ENCODE measurements at regions of chr12 and their contacts with region 1.

Region 1: DNA sequence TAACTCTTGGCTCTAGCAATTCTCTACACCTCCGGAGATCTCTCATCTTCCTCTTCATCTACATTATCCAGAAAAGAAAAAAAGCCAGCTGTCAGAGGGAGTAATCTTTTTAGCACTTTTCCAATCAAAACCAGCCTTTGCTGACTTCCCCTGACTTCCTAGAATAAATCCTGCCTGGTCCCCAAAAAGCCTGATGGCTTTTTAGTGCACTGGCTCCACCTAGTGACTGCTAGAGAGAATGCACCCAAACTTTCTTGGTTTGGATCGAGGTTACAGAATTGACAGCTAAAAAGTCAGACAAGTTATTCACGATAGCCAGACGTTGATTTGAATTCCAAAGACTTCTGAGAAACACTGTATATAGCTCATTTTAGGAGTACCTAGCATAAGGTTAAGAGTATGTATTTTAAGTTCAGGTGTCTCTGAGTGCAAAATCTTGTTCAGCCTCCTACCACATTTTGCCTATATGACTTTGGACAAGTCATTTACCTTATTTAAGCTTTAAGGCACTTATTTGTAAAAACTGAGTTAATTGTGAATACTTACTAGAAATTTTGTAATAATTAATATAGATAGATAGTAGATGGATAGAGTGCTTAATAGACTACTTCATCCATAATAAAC is 185.7 kb upstream of the GRIN2B start:
- DNase-seq: no peak
- ATAC-seq: peak; percentile 66
- H3K4me3 Mint-ChIP-seq: no peak overlapping the region
- H3K27ac Mint-ChIP-seq: no peak overlapping the region
- H3K4me1 Mint-ChIP-seq: peaks cover 30% of the 10 kb centered on the region
- H3K27me3 Mint-ChIP-seq: no peaks in the 10 kb centered on the region
- CTCF ChIP-seq: peak; percentile 75

Region 2: DNA sequence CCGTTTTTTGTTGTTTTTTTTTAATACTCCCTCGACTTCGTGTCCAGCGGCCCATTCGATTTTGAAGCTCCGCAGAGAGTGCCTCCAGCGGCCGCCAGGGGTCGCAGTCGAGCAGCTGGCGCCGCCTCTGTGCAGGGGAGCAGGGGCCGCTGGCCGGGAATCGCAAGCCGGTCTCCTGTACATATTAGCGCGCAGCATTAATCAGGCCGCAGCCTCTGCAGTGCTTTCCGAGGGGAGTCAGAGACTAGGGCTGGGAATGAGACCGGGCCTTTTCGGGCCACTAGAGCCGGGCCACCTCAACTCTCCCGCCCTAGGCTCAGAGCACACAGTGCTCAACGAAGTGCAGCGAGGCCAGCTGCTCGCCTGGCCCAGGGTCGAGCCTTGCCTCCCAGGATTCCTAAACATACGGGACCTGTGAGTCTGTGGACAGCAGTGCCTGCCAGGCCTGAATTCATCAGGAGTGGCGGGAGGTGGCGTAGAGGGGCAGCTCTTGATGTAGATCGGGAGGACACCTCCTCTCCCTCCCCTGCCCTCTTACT is 888.8 kb before region 1 on chr12:
- CTCF ChIA-PET with region 1: interaction called, 14 read pairs
- POLR2A ChIA-PET with region 1: no interaction called
- intact Hi-C with region 1: loop called (anchors 1 kb)
- DNase-seq: peak; percentile 58
- ATAC-seq: peak; percentile 69
- H3K4me3 Mint-ChIP-seq: peak overlapping the region; percentile 17
- H3K27ac Mint-ChIP-seq: no peak overlapping the region
- H3K4me1 Mint-ChIP-seq: peaks cover 4% of the 10 kb centered on the region
- H3K27me3 Mint-ChIP-seq: peaks cover 27% of the 10 kb centered on the region
- CTCF ChIP-seq: peak; percentile 49

Region 3: GRCh38 chr12:13661005-13661887 is 505.9 kb before region 1 on chr12:
- CTCF ChIA-PET with region 1: interaction called, 5 read pairs
- POLR2A ChIA-PET with region 1: no interaction called
- intact Hi-C with region 1: loop called (anchors 2 kb)
- DNase-seq: no peak
- ATAC-seq: peak; percentile 58
- H3K4me3 Mint-ChIP-seq: no peak overlapping the region
- H3K27ac Mint-ChIP-seq: no peak overlapping the region
- H3K4me1 Mint-ChIP-seq: no peaks in the 10 kb centered on the region
- H3K27me3 Mint-ChIP-seq: no peaks in the 10 kb centered on the region
- CTCF ChIP-seq: peak; percentile 68

Region 4: DNA sequence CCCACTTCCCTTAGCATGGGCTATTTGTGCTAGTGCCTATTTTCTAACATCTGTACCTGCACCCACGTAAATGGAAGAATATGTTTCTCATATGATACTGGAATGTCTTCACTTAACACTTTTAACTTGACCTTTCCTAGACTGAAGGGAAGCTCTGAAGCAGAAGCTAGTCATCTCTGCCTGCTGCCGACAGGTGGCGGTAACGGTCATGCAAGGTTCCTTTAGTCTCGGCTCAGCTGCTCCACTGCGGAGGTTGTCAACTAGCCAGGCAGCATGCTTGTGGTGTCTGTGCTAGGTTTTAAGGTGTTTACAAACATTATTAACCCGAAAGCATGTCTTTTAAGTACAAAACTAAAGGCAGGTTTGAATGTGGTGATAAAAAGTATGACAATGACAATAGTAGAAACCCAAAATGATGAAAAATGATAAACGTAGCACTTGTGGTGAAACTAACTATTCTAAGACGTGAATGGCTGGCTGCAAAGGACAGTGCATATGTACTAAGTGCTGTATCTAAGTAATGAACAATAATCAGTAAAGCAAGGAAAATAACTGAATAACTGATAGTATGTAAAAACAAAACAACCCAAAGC is 302.9 kb before region 1 on chr12:
- CTCF ChIA-PET with region 1: interaction called, 114 read pairs
- POLR2A ChIA-PET with region 1: interaction called, 3 read pairs
- intact Hi-C with region 1: loop called (anchors 1 kb)
- DNase-seq: peak; percentile 45
- ATAC-seq: peak; percentile 79
- H3K4me3 Mint-ChIP-seq: no peak overlapping the region
- H3K27ac Mint-ChIP-seq: no peak overlapping the region
- H3K4me1 Mint-ChIP-seq: no peaks in the 10 kb centered on the region
- H3K27me3 Mint-ChIP-seq: peaks cover 29% of the 10 kb centered on the region
- CTCF ChIP-seq: peak; percentile 80

Region 5: GRCh38 chr12:13981990-13982389 is 185.1 kb before region 1 on chr12:
- CTCF ChIA-PET with region 1: interaction called, 4 read pairs
- POLR2A ChIA-PET with region 1: no interaction called
- intact Hi-C with region 1: loop called (anchors 5 kb)
- DNase-seq: no peak
- ATAC-seq: no peak
- H3K4me3 Mint-ChIP-seq: no peak overlapping the region
- H3K27ac Mint-ChIP-seq: no peak overlapping the region
- H3K4me1 Mint-ChIP-seq: peaks cover 19% of the 10 kb centered on the region
- H3K27me3 Mint-ChIP-seq: peaks cover 62% of the 10 kb centered on the region
- CTCF ChIP-seq: no peak

Region 6: DNA sequence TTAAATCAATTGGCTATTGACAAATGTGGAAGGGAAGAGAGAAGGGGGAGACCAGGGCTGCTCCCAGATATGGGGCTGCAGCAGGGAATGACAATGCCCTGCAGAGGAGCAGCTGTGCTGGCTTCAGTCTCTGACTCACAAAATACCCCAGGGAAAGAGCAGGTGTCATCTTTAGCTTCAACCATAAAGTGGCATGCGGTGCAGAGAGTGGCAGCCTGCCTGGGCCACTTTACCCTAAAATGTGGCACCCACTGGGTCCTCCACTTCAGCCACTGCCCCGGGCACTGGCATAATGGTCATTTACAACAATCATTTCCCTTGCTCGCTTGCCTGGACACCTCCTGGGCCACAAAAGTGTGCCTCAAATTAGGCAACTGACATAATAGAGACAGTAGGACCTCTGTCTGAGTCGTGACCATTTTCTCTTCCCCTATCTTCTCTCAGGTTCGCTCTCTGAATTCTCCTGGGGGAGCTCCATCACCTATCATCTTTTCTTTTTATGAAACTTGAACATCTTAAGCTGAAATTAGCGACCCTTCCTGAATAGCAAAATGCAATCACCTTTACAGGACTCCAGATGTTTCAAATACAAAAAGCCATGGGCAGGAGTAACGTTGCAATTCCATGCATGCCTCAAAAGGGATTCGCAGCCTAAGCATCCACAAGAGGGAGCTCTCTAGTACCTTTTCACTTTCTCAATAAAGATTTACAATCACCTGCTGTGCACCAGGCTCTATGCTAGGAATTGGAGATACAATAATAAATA is 18.5 kb after region 1 on chr12:
- CTCF ChIA-PET with region 1: interaction called, 33 read pairs
- POLR2A ChIA-PET with region 1: interaction called, 18 read pairs
- intact Hi-C with region 1: loop called (anchors 1 kb)
- DNase-seq: peak; percentile 41
- ATAC-seq: peak; percentile 86
- H3K4me3 Mint-ChIP-seq: peak overlapping the region; percentile 69
- H3K27ac Mint-ChIP-seq: peak overlapping the region; percentile 87
- H3K4me1 Mint-ChIP-seq: peaks cover 30% of the 10 kb centered on the region
- H3K27me3 Mint-ChIP-seq: no peaks in the 10 kb centered on the region
- CTCF ChIP-seq: peak; percentile 28

Region 7: DNA sequence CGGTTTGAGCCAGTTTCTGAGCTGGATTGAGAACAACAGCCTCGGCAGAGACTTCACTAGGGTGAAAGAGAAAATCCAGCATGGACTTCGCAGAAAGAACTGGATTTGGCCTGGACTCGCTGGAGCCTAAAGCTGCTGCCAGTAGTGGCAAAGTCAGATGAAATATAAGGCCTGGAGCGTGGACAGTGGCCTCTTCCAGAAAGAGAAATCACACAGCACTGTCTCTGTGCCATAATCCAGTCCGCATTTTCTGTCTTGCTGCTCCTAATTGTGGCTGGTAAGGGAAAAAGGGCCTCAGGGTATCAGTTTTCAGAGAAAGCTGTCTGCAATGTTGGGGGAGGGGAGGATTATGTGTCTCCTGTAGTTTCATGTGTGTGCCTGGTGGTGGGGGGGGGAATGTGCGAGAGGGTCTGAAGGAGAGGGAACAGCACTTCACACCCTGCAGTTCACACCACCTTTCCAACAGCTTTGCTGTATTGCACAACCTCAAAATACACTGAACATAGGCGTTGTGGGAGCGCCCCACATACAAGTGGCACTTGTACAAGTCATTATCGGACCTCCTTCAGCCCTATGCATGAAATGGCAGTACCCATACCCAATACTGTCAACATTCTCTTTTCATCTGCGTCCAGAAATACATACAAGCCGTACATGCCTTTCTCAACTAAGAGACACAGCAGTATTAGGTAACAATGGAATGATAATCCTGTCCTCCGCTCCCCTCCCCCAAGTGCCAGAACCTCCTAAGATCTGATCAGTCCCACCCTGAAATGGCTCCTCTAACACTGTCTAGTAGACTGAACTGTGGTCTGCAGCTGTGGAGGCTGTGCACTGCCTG is 90.8 kb after region 1 on chr12:
- CTCF ChIA-PET with region 1: no interaction called
- POLR2A ChIA-PET with region 1: no interaction called
- intact Hi-C with region 1: no loop called
- DNase-seq: no peak
- ATAC-seq: peak; percentile 68
- H3K4me3 Mint-ChIP-seq: peak overlapping the region; percentile 75
- H3K27ac Mint-ChIP-seq: peak overlapping the region; percentile 98
- H3K4me1 Mint-ChIP-seq: peaks cover 70% of the 10 kb centered on the region
- H3K27me3 Mint-ChIP-seq: no peaks in the 10 kb centered on the region
- CTCF ChIP-seq: no peak

Measured in activated B cell treated with CpG ODN at 0.5 μM for 24 hours (primary cell).